ENCODE measurements at regions of chr5 and their contacts with region 1.

Region 1: GRCh38 chr5:128632264-128632663 is 94.2 kb upstream of the FBN2 start:
- DNase-seq: no peak
- H3K4me3 ChIP-seq: no peak overlapping the region
- H3K27ac ChIP-seq: no peak overlapping the region
- H3K4me1 ChIP-seq: no peaks in the 10 kb centered on the region
- H3K27me3 ChIP-seq: no peaks in the 10 kb centered on the region
- CTCF ChIP-seq: no peak
- EP300 ChIP-seq: no peak
- POLR2A ChIP-seq: no peak

Region 2: GRCh38 chr5:128470638-128471037 is 161.6 kb before region 1 on chr5:
- in situ Hi-C with region 1: no loop called
- intact Hi-C with region 1: no loop called
- DNase-seq: no peak
- H3K4me3 ChIP-seq: no peak overlapping the region
- H3K27ac ChIP-seq: no peak overlapping the region
- H3K4me1 ChIP-seq: no peaks in the 10 kb centered on the region
- H3K27me3 ChIP-seq: peaks cover 4% of the 10 kb centered on the region
- CTCF ChIP-seq: no peak
- EP300 ChIP-seq: no peak
- POLR2A ChIP-seq: no peak

Region 3: GRCh38 chr5:129014193-129014592 is 381.9 kb after region 1 on chr5:
- in situ Hi-C with region 1: no loop called
- intact Hi-C with region 1: loop called (anchors 5 kb)
- DNase-seq: no peak
- H3K4me3 ChIP-seq: no peak overlapping the region
- H3K27ac ChIP-seq: no peak overlapping the region
- H3K4me1 ChIP-seq: peaks cover 0 to 3% (median 0%) of the 10 kb centered on the region in 4 donors
- H3K27me3 ChIP-seq: no peaks in the 10 kb centered on the region
- CTCF ChIP-seq: no peak
- EP300 ChIP-seq: no peak
- POLR2A ChIP-seq: no peak

Region 4: GRCh38 chr5:129177536-129178229 is 545.4 kb after region 1 on chr5:
- in situ Hi-C with region 1: no loop called
- intact Hi-C with region 1: no loop called
- DNase-seq: no peak
- H3K4me3 ChIP-seq: no peak overlapping the region
- H3K27ac ChIP-seq: no peak overlapping the region
- H3K4me1 ChIP-seq: no peaks in the 10 kb centered on the region
- H3K27me3 ChIP-seq: no peaks in the 10 kb centered on the region
- CTCF ChIP-seq: no peak
- EP300 ChIP-seq: no peak
- POLR2A ChIP-seq: no peak

Measured in transverse colon (tissue), 4 donors.